ENCODE measurements at regions of chr7 and their contacts with region 1.

Region 1: GRCh38 chr7:150514748-150515222 is at the start of gene GIMAP7:
- DNase-seq: peak; percentile 29 to 87 (median 71)
- ATAC-seq: peak; percentile 72 to 85
- H3K4me3 Mint-ChIP-seq: peak within 1 kb of the TSS; percentile 96 to 100 (median 99)
- H3K27ac Mint-ChIP-seq: peak within 1 kb of the TSS; percentile 94 to 99 (median 98)
- H3K4me1 Mint-ChIP-seq: peaks cover 25 to 50% (median 48%) of the 10 kb centered on the region in 4 donors
- H3K27me3 Mint-ChIP-seq: no peaks in the 10 kb centered on the region
- polyA plus RNA-seq, gene GIMAP7: 451 to 821 (median 658) TPM

Region 2: GRCh38 chr7:150404805-150405583 is 109.8 kb before region 1 on chr7:
- POLR2A ChIA-PET with region 1: interaction called, 14 read pairs
- DNase-seq: peak; percentile 62 to 82 (median 72)
- ATAC-seq: peak; percentile 80 to 81
- H3K4me3 Mint-ChIP-seq: peak overlapping the region; percentile 90 to 98 (median 98)
- H3K27ac Mint-ChIP-seq: peak overlapping the region; percentile 89 to 99 (median 98)
- H3K4me1 Mint-ChIP-seq: peaks cover 25 to 58% (median 41%) of the 10 kb centered on the region in 4 donors
- H3K27me3 Mint-ChIP-seq: no peaks in the 10 kb centered on the region

Region 3: GRCh38 chr7:150481186-150481920 is 33.4 kb before region 1 on chr7:
- POLR2A ChIA-PET with region 1: interaction called, 504 read pairs
- DNase-seq: peak; percentile 25 to 76 (median 63)
- ATAC-seq: peak; percentile 51 to 69
- H3K4me3 Mint-ChIP-seq: peak overlapping the region; percentile 71 to 97 (median 88)
- H3K27ac Mint-ChIP-seq: peak overlapping the region; percentile 98 to 100 (median 100)
- H3K4me1 Mint-ChIP-seq: peaks cover 57 to 98% (median 94%) of the 10 kb centered on the region in 4 donors
- H3K27me3 Mint-ChIP-seq: no peaks in the 10 kb centered on the region

Region 4: GRCh38 chr7:150580638-150581394 is 66.0 kb after region 1 on chr7:
- POLR2A ChIA-PET with region 1: interaction called, 14 read pairs
- DNase-seq: no peak
- ATAC-seq: no peak
- H3K4me3 Mint-ChIP-seq: peak overlapping the region in 1 of 10 donors; percentile 38
- H3K27ac Mint-ChIP-seq: peak overlapping the region in 7 of 10 donors; percentile 7 to 85 (median 76)
- H3K4me1 Mint-ChIP-seq: peaks cover 15 to 64% (median 44%) of the 10 kb centered on the region in 4 donors
- H3K27me3 Mint-ChIP-seq: no peaks in the 10 kb centered on the region

Region 5: DNA sequence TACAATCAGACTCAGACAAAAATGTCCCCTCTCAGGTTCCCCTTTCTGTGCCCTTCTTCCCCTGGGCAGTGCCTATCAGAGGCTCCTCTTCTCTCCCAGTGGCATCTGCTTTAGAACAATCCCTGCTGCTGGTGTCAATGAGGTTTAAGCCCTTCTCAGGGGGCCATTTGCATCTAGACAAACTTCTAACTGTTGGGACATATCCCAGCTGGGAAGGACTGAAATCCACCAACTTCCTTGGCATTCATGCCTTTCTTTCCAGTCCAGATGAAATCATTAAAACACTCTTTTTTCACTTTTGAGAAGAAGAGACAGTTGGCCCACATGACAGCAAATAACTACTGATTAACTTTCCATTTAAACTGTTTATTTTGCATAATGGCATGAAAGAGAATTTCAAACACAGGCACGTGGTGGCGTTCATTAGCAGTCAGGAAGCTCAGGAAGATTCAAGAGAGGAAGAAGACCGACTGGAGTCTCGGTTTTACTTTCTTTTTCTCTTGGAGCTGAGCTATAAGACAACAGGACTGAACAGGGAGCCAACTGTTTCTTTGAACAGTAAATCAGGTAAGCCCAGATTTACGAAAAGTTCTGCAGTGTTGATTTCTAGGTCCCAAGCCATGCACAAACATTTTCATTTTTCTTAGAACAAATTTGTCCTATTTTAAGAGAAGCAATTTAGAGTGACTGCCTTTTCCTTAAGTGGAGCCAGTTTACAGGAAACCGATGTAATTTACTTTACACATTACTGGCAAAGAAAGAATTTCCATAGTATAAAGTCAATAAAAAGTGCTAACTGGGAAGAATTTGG is 170.6 kb after region 1 on chr7 and contains the start of gene GIMAP2:
- POLR2A ChIA-PET with region 1: interaction called, 44 read pairs
- DNase-seq: peak in 5 of 10 donors; percentile 7 to 68 (median 58)
- ATAC-seq: peak; percentile 71 to 89
- H3K4me3 Mint-ChIP-seq: peak within 1 kb of the TSS; percentile 94 to 100 (median 97)
- H3K27ac Mint-ChIP-seq: peak within 1 kb of the TSS; percentile 95 to 100 (median 98)
- H3K4me1 Mint-ChIP-seq: peaks cover 46 to 93% (median 80%) of the 10 kb centered on the region in 4 donors
- H3K27me3 Mint-ChIP-seq: no peaks in the 10 kb centered on the region
- polyA plus RNA-seq, gene GIMAP2: 89.3 to 102 (median 93.8) TPM

Region 6: DNA sequence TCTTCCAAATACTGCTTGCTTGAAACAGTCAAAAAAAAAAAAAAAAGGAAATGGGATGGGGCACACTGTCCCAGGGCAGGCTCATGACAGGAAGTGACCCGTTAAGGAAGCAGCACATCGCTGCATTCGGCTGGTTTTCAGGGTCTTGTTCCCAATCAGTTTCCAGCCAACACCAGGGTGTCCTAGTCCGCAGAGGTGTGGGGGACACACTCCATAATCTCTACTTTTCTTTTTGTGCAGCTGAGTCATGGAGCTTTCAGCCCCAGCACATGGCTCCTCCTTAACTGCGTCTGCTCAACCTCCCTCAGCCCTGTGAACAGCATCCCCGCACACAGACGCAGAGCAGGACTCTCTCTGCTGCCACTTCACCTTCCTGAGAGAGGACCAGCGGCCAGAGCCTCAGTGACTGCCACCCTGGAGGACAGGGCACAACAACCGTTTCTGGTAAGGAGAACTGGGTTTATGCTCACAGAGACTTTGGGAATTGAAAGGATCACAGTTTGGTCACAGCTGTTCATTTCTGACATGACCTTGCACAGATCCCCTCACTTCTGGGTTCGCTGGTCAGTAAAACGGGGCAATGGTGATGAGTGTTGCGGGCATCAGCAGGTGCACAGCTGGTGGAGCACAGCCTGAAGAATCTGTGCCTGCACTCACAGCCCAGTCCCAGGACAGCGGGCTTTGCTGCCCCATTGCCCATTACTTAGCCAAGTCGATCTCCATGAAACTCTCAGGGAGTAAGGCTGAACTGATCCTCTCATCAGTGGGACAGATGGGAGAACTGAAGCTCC is 222.7 kb after region 1 on chr7 and contains the start of gene GIMAP5:
- POLR2A ChIA-PET with region 1: interaction called, 67 read pairs
- DNase-seq: peak in 6 of 10 donors; percentile 27 to 60 (median 40)
- ATAC-seq: peak; percentile 67 to 76
- H3K4me3 Mint-ChIP-seq: peak within 1 kb of the TSS; percentile 88 to 100 (median 98)
- H3K27ac Mint-ChIP-seq: peak within 1 kb of the TSS; percentile 93 to 100 (median 96)
- H3K4me1 Mint-ChIP-seq: peaks cover 48 to 75% (median 68%) of the 10 kb centered on the region in 4 donors
- H3K27me3 Mint-ChIP-seq: no peaks in the 10 kb centered on the region
- polyA plus RNA-seq, gene GIMAP5: 320 to 506 (median 401) TPM